Activated naive CD4-positive, alpha-beta T cell treated with anti-CD3 and anti-CD28 coated beads for 36 hours (primary cell): ENCODE measurements at regions of chr4 and their contacts with region 1.

Region 1: DNA sequence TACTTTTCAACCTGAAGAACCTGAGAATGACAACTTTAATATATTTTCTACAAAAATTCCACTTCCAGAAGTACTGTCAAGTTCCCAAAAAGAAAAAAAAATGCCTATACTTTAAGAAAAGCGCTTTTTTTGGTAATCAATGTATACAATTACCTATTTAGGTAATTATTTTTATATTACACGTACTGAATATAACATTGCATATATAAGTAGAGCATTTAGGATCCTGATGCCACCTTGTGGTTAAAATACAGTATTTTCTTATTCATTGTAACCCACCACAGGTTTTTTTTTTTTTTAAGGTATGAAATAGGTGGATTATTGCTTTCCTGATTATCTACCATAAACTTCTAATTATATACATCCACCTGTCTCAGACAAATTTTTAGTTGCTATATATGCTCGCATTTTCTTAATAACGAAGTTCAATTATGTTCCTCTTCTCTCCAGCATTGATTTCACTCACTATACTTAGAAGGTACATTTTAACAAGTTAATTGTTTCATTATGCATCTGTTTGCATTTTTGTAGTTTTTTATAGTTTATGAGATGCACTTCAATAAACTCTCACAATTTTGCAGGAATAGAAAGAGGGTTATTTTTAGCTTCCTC is 5.2 kb downstream of the MAP9 start:
- DNase-seq: no peak
- H3K4me3 Mint-ChIP-seq: no peak overlapping the region
- H3K27ac Mint-ChIP-seq: no peak overlapping the region
- H3K4me1 Mint-ChIP-seq: peaks cover 7% of the 10 kb centered on the region
- H3K27me3 Mint-ChIP-seq: no peaks in the 10 kb centered on the region

Region 2: GRCh38 chr4:154807042-154807630 is 564.4 kb before region 1 on chr4:
- CTCF ChIA-PET with region 1: interaction called, 5 read pairs
- intact Hi-C with region 1: loop called (anchors 1 kb)
- DNase-seq: no peak
- H3K4me3 Mint-ChIP-seq: no peak overlapping the region
- H3K27ac Mint-ChIP-seq: no peak overlapping the region
- H3K4me1 Mint-ChIP-seq: no peaks in the 10 kb centered on the region
- H3K27me3 Mint-ChIP-seq: peaks cover 5% of the 10 kb centered on the region

Region 3: DNA sequence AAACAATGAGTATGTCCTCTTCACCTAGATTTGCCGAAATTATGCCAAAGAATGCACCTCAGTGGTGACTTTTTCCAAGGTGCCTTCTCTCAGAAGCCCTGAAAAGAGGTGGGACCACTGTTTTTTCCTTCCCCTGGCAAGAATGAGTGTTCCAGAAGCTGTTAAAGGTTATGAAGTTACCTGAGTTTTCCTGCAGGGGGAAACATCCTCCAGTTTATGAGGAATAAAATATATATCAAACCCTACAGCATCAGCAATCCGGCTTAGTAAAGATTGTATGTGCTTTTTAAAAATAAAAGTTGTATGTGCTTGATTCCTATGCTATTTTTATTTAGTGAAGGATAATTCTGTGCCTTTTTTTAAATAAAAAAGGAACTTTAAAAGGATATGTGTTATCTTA is 517.2 kb before region 1 on chr4:
- CTCF ChIA-PET with region 1: no interaction called
- intact Hi-C with region 1: loop called (anchors 1 kb)
- DNase-seq: no peak
- H3K4me3 Mint-ChIP-seq: no peak overlapping the region
- H3K27ac Mint-ChIP-seq: no peak overlapping the region
- H3K4me1 Mint-ChIP-seq: no peaks in the 10 kb centered on the region
- H3K27me3 Mint-ChIP-seq: no peaks in the 10 kb centered on the region

Region 4: DNA sequence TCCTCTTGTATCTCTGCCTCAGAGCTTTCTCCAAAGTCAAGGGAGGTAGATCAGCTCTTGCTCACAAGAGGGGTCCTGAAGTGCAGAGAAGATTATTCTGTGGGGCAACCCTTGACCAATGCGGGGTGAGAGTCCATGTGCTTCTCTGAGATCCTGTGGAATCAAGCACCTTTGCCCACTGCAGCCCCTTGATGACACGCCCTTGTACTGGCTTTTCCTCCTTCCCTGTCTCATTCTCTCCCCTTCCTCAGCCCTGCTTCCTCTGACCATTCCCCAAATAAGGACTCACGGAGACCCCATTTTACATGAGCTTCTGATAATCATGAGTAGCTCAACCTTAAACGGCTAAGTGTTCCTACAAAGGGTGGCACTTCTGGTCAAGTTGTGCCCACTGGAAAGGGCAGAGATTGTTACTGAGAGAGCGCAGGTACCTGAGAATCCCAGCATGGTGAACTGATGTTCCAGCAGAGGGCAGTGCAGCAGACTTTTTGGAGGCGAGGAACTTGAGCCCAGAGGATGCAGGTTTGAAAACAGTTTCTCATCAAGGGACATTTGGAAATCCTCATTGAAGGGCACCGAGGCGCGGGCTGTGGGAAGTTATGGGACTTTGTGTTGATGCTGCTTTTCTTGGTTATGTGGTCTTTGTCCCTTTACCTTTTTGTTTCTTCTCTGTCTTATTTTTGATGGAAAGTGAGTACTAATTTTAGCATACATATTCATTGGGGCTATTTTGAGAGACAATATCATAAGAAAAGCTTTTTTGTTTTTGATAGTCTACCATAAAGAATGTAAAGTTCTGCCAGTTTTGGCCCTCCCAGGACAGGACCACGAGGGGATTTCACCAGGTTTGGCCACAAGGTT is 389.1 kb before region 1 on chr4:
- CTCF ChIA-PET with region 1: interaction called, 3 read pairs
- intact Hi-C with region 1: loop called (anchors 1 kb)
- DNase-seq: peak; percentile 61
- H3K4me3 Mint-ChIP-seq: no peak overlapping the region
- H3K27ac Mint-ChIP-seq: no peak overlapping the region
- H3K4me1 Mint-ChIP-seq: no peaks in the 10 kb centered on the region
- H3K27me3 Mint-ChIP-seq: peaks cover 7% of the 10 kb centered on the region

Region 5: GRCh38 chr4:155025762-155026457 is 345.6 kb before region 1 on chr4:
- CTCF ChIA-PET with region 1: no interaction called
- intact Hi-C with region 1: loop called (anchors 1 kb)
- DNase-seq: peak; percentile 42
- H3K4me3 Mint-ChIP-seq: no peak overlapping the region
- H3K27ac Mint-ChIP-seq: no peak overlapping the region
- H3K4me1 Mint-ChIP-seq: no peaks in the 10 kb centered on the region
- H3K27me3 Mint-ChIP-seq: no peaks in the 10 kb centered on the region

Region 6: DNA sequence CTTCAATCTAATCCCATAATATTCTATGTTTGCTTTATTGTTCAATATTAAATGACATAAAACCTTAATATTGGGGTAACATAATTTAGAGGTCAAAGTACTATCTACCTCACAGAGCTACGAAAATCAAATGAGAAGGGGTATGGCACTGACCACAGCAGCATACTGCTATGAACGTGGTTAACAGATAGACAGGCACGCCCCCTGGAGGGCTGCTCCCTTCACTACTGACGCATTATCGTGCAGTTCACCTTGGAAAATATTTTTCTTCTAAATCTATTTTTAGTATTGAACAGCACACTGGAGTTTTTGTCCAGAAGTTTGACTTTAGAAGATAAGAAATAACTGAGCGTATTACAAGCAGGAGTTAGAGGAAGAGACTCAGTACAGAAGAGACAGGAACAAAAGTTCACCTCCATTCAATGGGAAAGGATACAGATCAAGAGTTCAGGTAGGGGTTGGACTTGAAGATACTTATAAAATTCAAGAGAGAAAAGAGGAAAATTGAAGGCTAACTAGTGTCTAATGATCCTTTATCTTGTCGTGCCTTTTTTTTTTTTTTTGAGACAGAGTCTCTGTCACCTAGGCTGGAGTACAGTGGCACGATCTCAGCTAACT is 17.5 kb before region 1 on chr4:
- CTCF ChIA-PET with region 1: no interaction called
- intact Hi-C with region 1: no loop called
- DNase-seq: peak; percentile 60
- H3K4me3 Mint-ChIP-seq: no peak overlapping the region
- H3K27ac Mint-ChIP-seq: no peak overlapping the region
- H3K4me1 Mint-ChIP-seq: no peaks in the 10 kb centered on the region
- H3K27me3 Mint-ChIP-seq: no peaks in the 10 kb centered on the region